T-cell (primary cell): ENCODE measurements at regions of chr18 and their contacts with region 1.

Region 1: GRCh38 chr18:55694291-55694690 is 106.3 kb upstream of the TCF4 start:
- DNase-seq: no peak
- ATAC-seq: no peak
- H3K4me3 ChIP-seq: no peak overlapping the region
- H3K4me3 Mint-ChIP-seq: no peak overlapping the region
- H3K27ac ChIP-seq: no peak overlapping the region
- H3K27ac Mint-ChIP-seq: no peak overlapping the region
- H3K4me1 ChIP-seq: no peaks in the 10 kb centered on the region
- H3K4me1 Mint-ChIP-seq: no peaks in the 10 kb centered on the region
- H3K27me3 ChIP-seq: no peaks in the 10 kb centered on the region
- H3K27me3 Mint-ChIP-seq: peaks cover 2 to 5% of the 10 kb centered on the region in 2 donors

Region 2: DNA sequence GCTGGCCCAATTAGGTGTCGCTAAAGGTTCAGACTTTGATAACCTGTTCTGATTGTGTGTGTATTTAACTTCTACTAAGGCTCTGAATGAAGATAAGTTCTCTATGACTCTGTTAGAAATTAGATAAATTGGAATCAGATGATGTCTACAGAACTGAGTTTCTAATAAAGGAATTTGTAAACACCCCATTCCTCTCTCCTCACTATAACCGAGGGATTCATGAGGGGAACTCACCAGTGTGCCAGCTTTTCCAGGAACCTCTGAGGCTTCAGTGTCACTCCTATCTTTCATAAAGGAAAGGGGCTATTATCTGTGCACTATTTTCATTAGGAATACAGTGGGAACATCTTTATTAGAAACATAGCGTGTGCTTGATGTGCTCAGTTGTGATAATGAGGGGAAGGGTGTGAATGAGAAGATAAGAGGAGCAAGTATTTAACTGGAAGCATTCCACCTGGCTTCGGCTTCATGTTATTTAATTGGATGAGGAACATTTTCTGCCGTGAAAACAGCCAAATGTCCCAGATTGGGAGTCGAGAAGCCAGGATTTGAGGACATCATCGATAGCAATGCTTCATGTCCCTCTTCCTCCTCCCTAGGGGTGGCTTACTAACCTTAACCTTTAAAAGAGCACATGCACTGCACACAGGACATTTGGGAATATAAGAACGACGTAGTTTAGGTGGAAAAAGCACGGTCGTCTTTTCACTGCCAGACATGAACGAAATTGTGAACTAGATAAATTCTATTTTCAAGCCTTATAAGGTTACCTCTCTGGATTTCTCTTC is 21.5 kb before region 1 on chr18:
- CTCF ChIA-PET with region 1: no interaction called
- POLR2A ChIA-PET with region 1: interaction called in 1 of 2 experiments, 14 read pairs
- DNase-seq: no peak
- ATAC-seq: no peak
- H3K4me3 ChIP-seq: no peak overlapping the region
- H3K4me3 Mint-ChIP-seq: no peak overlapping the region
- H3K27ac ChIP-seq: no peak overlapping the region
- H3K27ac Mint-ChIP-seq: no peak overlapping the region
- H3K4me1 ChIP-seq: no peaks in the 10 kb centered on the region
- H3K4me1 Mint-ChIP-seq: no peaks in the 10 kb centered on the region
- H3K27me3 ChIP-seq: no peaks in the 10 kb centered on the region
- H3K27me3 Mint-ChIP-seq: peaks cover 0 to 5% of the 10 kb centered on the region in 2 donors